RWPE1 (cell line): ENCODE measurements at regions of chr15 and their contacts with region 1.

Region 1: DNA sequence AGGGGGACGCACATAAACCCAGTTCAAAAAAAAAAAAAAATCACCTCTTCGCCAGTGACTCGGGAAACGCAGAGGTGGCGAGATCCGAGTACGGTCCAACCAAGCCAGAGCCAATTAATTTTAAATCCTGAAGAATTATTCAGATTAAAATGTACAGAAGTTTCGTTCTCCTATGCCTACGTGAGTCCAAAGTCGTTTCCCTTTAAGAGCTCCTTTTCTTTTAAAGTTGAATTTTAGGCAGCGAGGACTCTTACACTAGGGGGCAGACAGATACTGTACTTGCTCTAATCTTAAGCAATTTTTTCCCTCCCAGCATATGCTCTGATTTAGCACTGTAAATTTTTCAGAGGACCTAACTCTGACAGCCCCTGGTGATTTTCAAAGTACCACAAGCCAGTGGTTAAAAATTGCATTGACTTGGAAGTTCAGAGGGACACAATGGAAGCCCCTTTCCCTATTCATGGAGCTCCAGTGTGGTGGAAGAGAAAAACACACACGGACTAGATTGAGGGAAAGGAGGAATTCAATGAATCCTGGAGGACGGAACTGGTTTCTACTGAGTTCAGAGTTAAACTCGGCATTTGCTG is 3.3 kb upstream of the NR2F2 start:
- DNase-seq: peak; percentile 68
- H3K27ac ChIP-seq: peak overlapping the region; percentile 87
- CTCF ChIP-seq: peak; percentile 91

Region 2: DNA sequence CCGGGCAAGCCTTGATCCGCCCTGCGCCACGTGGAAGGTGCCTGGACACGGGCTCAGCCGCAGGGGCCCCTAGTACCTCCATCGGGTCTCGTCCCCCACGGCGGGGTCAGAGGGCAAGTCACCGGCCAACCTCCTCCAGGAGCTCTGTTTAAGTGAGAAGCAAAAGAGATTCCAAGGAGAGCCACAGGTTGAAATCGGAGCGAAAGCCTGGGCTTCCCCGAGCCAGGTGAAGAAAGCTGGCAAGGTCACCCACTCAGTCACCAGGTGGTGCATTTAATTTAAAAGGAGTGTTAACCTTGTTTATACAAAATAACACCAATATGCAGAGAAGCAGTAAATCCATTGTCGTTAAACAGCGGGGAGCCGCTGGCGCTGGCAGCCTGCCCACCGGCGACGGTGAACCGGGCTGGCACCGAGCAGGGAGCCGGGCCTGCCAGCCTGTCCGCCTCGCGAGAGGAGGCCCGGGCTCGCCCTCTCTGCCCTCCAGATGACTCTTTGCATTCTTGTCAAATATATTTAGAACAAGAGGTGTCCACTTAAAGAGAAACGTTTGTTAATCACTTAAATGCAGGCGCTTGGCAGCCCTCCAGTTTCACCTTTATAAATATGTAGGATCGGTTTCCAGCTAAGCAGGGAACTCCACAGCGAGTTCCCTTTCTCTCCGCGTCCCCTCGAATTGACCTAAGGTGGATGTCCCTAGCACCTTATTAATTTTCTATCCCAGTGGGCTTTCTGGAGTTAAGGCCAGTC is 274.0 kb before region 1 on chr15:
- CTCF ChIA-PET with region 1: no interaction called
- POLR2A ChIA-PET with region 1: no interaction called
- DNase-seq: peak; percentile 34
- H3K27ac ChIP-seq: no peak overlapping the region
- CTCF ChIP-seq: no peak

Region 3: DNA sequence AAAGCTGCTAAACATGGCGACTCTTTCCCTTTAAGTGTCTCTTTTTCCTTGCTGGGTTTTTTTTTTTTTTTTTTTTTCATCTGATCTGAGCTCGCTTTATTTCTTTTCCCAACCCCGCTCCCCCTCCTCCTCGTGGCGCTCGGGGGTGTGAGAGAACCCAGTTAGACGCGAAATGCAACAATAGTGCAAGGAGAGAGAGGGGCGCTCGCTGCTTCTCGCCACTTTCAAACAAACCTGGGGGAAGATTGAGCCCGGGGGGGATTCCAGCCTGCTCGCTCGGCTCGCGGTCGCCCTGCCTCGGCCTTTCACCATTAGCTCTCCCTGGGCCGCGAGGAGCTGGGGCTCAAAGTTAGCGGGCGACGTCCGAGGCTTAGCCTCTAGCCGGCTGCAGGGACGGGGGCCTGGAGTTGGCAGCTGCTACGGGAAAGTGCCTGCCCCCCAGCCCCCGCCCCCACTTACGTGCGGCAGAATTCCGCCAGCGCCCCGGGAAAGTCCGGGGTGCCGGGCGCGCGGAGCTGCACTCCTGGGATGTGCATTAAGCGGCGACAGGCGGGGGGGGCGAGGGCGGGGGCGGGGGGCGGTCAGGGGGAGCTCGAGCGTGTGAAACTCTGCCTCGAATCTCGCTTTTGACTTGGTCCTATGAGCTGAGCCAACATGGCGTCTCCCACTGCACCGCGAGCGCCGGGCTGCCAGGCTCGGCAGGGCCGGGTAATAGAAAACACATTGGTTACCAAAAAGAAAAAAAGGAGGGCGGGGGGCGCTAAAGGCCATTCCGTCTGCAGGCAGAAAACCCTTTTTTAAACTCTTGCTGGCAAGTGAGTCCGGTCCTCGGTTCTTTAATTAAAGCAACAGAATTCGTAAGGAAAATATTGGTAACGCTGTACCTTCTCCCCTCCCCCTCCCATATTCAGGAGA is 13.6 kb after region 1 on chr15:
- CTCF ChIA-PET with region 1: interaction called, 13 read pairs
- POLR2A ChIA-PET with region 1: interaction called, 8 read pairs
- DNase-seq: no peak
- H3K27ac ChIP-seq: peak overlapping the region; percentile 87
- CTCF ChIP-seq: no peak

Region 4: DNA sequence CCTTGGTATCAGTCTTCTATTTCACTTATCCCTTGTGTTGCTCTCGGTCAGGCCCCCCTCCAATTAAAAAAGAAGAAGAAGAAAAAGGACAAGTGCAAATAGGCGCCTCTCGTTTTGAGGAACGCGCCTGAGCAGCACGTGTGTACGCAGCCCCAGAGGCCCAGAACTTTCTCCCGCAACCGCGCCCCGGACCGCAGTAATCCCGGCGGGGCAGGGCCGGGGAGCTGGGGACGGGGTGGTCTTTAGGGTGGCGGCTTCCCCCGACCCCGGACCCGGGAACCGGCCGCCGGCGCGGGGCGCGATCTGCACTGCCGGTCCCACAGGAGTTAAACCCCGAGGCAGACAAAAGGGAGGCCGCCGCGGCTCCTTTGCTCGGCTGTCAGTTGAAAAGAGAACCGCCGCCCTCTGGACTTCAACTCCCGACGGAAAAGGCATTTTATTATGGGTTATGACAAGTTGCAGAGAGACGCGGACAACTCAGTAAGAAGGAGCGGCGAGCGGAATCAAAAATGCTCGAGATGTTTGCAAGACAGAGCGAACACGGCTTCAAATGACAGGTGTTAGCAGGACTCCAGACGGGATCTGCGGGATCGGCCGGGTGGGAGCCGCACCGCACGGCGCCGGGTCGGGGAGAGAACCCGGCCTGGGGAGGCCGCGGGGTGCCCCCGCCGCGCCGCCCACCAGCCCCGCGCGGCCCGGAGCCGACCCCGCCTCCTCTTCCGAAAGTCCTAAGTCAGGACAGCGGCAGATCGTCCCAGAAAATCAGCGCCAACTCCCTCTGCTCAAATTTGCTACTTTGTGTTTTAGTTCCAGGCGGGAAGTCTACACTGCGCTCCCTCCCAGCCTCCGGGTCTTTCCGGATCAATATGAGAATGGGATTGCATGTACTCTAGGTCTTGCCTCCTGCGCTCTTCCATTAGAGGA is 82.2 kb after region 1 on chr15:
- CTCF ChIA-PET with region 1: no interaction called
- POLR2A ChIA-PET with region 1: no interaction called
- DNase-seq: no peak
- H3K27ac ChIP-seq: no peak overlapping the region
- CTCF ChIP-seq: no peak